ENCODE measurements at regions of chr16 and their contacts with region 1.

Region 1: DNA sequence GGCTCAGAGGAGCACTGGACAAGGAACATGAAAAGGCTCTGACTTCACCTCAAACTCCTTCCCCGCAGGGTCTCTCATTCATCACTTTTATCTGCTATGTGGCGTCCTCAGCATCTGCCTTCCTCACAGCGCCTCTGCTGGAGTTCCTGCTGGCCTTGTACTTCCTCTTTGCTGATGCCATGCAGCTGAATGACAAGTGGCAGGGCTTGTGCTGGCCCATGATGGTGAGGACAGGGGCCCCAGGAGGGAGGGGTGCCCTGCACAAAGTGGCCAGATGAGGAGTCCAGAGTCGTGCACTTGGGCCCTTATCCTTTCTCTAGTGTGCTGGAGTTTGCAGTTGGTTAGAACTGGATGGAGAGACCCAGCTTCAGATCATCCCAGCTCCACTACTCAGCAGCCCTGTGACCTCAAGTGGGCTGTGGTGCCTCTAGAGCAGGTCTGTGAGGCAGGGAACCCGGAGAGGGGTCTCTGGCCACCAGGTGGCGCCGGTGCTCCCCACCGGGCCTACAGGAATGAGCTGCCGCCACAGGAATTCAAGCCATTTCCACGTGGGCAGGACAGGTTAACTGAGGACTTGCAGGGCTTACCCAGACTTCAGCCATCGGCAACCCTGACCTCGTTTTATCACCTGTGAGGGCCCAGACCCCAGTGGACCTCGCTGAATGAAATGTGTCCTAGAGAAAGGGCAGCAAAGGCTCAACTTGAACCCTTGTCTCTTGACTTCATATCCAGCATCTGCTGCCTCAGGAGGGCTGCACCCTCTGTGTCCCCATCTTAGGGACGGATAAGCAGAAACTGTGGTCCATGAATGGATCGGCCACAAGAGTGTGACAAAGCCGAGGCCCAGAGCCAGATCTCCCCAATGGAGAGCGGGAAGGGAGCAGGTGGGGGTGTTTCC is 4.0 kb downstream of the CMTM3 start:
- DNase-seq: peak; percentile 92
- ATAC-seq: peak; percentile 31
- H3K4me3 Mint-ChIP-seq: no peak overlapping the region
- H3K27ac Mint-ChIP-seq: peak overlapping the region; percentile 71
- H3K4me1 Mint-ChIP-seq: peaks cover 35% of the 10 kb centered on the region
- H3K27me3 Mint-ChIP-seq: no peaks in the 10 kb centered on the region
- CTCF ChIP-seq: peak; percentile 85

Region 2: DNA sequence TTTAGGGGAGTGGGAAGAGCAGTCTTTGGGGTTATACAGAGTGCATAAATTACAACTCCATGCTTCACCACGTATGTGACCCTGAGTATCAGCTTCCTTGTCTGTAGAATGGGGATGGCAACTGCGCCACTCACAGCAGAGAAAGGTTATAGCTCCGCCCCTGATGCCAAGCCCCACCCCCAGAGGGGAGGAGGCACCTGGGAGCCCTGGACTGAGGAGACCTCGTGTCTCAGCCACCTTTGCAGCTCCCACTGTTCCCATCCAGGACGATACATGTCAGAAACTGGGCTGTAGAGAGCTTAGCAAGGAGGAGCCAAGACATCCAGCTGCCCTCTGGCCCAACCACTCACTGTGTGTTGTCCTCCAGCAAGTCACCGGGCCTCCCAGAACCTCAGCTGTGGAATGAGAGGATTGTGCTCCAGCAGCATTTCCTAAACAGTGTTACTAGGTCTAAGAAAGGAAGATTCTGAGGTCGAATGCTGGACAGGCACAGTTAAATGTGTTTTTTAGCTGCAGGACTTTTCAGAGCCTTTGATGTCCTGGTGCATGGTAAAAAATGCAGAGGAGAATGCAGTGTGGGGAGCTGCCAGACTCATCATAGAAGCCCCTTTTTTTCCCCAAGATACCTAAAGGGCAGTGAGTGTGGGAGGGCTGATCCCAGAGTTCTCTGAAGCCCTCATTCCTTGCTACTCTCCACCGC is 132.0 kb before region 1 on chr16:
- CTCF ChIA-PET with region 1: interaction called, 10 read pairs
- POLR2A ChIA-PET with region 1: no interaction called
- intact Hi-C with region 1: no loop called
- DNase-seq: peak; percentile 72
- ATAC-seq: peak; percentile 28
- H3K4me3 Mint-ChIP-seq: no peak overlapping the region
- H3K27ac Mint-ChIP-seq: no peak overlapping the region
- H3K4me1 Mint-ChIP-seq: peaks cover 30% of the 10 kb centered on the region
- H3K27me3 Mint-ChIP-seq: no peaks in the 10 kb centered on the region
- CTCF ChIP-seq: no peak

Region 3: DNA sequence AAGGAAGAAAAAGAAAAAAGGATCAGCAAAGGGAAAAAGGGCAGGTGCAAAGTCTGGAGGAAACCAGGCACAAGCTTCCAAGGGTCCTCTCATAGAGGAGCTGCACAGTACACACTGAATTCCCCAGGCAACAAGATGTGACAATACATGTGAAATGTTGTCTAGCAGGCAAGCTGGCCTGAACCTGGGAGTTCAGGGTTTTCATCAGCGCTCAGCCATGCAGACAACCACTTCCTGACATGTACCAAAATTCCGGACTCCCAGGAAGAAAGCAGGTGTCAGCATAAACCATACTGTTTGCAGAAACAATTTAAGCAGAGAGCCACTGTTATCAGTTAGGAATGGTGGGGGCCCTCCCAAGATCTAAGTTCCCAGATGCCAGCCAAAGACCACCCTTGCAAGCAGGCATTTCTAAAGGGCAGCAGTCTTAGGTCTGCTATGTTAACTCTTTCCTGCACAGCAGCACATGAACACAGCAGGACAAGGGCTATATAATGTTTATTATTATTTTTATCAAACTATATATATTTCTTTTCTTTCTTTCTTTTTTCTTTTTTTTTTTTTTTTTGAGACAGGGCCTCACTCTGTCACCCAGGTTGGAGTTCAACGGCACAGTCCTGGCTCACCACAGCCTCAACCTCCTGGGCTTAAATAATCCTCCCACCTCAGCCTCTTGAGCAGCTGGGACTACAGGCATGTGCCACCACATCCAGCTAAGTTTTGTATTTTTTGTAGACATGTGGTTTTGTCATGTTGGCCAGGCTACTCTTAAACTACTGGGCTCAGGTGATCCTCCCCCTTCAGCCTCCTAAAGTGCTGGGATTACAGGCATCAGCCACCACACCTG is 68.6 kb before region 1 on chr16:
- CTCF ChIA-PET with region 1: no interaction called
- POLR2A ChIA-PET with region 1: no interaction called
- intact Hi-C with region 1: no loop called
- DNase-seq: no peak
- ATAC-seq: peak; percentile 13
- H3K4me3 Mint-ChIP-seq: no peak overlapping the region
- H3K27ac Mint-ChIP-seq: no peak overlapping the region
- H3K4me1 Mint-ChIP-seq: peaks cover 15% of the 10 kb centered on the region
- H3K27me3 Mint-ChIP-seq: no peaks in the 10 kb centered on the region
- CTCF ChIP-seq: no peak

Region 4: GRCh38 chr16:66562407-66562806 is 46.1 kb before region 1 on chr16:
- CTCF ChIA-PET with region 1: interaction called, 23 read pairs
- POLR2A ChIA-PET with region 1: interaction called, 7 read pairs
- intact Hi-C with region 1: loop called (anchors 5 kb)
- DNase-seq: no peak
- ATAC-seq: no peak
- H3K4me3 Mint-ChIP-seq: no peak overlapping the region
- H3K27ac Mint-ChIP-seq: peak overlapping the region; percentile 64
- H3K4me1 Mint-ChIP-seq: peaks cover 56% of the 10 kb centered on the region
- H3K27me3 Mint-ChIP-seq: no peaks in the 10 kb centered on the region
- CTCF ChIP-seq: peak; percentile 44

Region 5: DNA sequence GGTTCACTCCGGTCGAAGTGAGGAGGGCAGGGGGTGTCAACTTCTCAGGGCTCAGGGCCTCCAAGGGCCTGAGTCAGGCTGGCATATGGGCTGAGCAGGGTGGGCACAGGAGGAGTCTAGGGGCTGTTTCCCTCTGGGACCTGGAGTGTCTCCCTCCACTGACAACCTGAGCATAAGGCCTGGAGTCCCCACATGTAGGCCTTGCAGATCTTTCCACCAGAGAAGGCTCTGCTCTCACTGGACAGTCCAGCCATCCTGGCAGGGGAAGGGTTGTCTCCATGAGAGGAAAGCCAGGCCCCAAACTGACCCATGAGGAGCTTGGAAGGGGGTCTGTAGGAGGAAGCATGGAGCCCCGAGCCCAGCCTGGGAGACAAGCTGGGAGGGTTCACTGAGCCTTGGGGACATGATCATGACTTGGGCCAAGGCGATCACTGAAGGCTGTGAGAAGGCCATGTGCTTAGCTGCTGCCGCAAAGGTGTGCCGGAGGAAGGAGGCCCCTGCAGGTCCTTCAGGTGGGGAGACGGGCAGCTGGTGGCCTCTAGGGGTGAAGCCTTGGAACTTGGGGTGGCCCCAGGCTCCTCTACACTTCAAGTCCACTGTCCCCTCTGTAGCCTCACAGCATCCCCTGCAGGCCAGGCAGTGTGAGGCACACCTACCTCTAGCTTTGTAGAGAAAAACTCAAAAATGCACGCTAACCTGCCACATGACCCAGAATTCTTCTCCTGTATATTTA is 19.3 kb before region 1 on chr16:
- CTCF ChIA-PET with region 1: interaction called, 13 read pairs
- POLR2A ChIA-PET with region 1: interaction called, 4 read pairs
- intact Hi-C with region 1: no loop called
- DNase-seq: peak; percentile 79
- ATAC-seq: peak; percentile 96
- H3K4me3 Mint-ChIP-seq: peak overlapping the region; percentile 69
- H3K27ac Mint-ChIP-seq: no peak overlapping the region
- H3K4me1 Mint-ChIP-seq: peaks cover 36% of the 10 kb centered on the region
- H3K27me3 Mint-ChIP-seq: no peaks in the 10 kb centered on the region
- CTCF ChIP-seq: peak; percentile 81

Region 6: GRCh38 chr16:66618588-66619375 is 10.3 kb after region 1 on chr16:
- CTCF ChIA-PET with region 1: interaction called, 30 read pairs
- POLR2A ChIA-PET with region 1: no interaction called
- intact Hi-C with region 1: no loop called
- DNase-seq: no peak
- ATAC-seq: peak; percentile 37
- H3K4me3 Mint-ChIP-seq: no peak overlapping the region
- H3K27ac Mint-ChIP-seq: no peak overlapping the region
- H3K4me1 Mint-ChIP-seq: peaks cover 7% of the 10 kb centered on the region
- H3K27me3 Mint-ChIP-seq: no peaks in the 10 kb centered on the region
- CTCF ChIP-seq: no peak

Region 7: DNA sequence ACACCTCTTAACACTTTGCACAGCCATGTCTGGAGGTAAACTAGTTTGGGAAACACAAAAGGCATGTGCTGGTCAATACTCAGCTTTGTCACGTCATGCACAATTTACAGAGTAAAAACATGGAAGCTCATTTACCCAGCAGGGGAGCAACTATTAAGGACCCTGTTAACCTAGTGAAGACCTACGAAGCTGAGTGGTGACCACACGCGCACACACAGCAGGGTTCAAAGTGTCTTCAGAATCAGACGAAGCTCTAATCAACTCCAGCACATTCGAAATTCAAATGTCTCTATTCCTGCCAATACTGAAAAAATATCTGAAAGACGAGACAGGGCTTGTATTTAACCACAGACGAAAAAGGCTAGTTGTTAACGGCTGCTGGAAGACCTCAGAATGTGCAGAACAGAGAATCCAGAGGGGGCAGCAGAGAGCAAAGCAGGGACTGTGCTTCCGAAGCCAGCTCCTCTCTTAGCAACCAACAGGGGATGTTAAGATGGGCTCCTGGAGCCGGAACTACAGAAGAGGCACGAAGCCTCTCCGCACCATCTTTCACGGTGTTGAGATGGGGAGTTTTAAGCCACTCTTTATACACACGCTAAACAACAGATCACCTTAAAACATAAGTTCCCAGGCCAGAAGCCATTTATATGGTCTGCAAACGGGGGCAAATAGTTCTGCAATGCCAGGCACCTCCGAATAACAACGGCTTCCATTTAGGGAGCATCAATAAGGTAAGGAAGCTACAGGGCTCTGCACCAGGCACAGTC is 42.4 kb after region 1 on chr16:
- CTCF ChIA-PET with region 1: interaction called, 38 read pairs
- POLR2A ChIA-PET with region 1: no interaction called
- intact Hi-C with region 1: no loop called
- DNase-seq: peak; percentile 90
- ATAC-seq: peak; percentile 100
- H3K4me3 Mint-ChIP-seq: peak overlapping the region; percentile 15
- H3K27ac Mint-ChIP-seq: no peak overlapping the region
- H3K4me1 Mint-ChIP-seq: peaks cover 16% of the 10 kb centered on the region
- H3K27me3 Mint-ChIP-seq: no peaks in the 10 kb centered on the region
- CTCF ChIP-seq: peak; percentile 96

Region 8: DNA sequence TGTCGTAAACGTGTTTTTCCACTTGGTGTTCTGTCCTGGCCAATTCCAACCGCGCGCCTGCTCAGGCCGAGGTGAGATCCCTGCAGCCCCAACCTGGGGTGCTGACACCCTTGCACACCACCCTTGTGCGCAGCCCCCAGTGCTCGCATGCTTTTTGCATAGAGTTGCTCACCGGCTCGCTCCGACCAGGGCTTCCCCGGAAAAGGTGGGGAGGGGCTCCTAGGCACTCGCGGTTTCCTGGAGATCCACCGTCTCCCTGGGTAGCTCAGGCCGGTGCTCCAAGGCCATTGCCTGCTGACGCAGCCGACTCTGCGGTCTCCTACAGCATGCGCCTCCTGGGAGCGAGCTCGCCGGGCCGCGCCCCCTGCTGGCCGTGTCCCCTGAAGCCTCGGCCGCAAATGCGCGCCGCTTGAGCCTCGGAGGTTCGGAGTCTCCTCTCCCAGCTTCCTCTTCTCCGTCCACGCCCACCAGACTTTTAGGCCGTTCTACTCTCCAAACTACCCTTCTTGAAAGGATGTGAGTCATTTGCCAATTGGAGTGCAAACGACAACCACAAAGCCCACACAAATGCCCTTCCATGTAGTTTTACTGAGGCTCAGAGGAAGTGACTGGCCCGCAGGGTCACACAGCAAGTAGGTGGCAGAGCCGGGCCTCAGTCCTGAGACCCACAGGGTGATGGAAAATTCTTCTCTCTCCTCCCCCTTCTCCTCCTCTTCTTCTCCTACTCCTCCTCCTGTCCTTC is 264.6 kb after region 1 on chr16:
- CTCF ChIA-PET with region 1: interaction called, 10 read pairs
- POLR2A ChIA-PET with region 1: interaction called, 3 read pairs
- intact Hi-C with region 1: no loop called
- DNase-seq: peak; percentile 97
- ATAC-seq: peak; percentile 84
- H3K4me3 Mint-ChIP-seq: peak overlapping the region; percentile 83
- H3K27ac Mint-ChIP-seq: peak overlapping the region; percentile 93
- H3K4me1 Mint-ChIP-seq: peaks cover 48% of the 10 kb centered on the region
- H3K27me3 Mint-ChIP-seq: no peaks in the 10 kb centered on the region
- CTCF ChIP-seq: peak; percentile 94

Region 9: DNA sequence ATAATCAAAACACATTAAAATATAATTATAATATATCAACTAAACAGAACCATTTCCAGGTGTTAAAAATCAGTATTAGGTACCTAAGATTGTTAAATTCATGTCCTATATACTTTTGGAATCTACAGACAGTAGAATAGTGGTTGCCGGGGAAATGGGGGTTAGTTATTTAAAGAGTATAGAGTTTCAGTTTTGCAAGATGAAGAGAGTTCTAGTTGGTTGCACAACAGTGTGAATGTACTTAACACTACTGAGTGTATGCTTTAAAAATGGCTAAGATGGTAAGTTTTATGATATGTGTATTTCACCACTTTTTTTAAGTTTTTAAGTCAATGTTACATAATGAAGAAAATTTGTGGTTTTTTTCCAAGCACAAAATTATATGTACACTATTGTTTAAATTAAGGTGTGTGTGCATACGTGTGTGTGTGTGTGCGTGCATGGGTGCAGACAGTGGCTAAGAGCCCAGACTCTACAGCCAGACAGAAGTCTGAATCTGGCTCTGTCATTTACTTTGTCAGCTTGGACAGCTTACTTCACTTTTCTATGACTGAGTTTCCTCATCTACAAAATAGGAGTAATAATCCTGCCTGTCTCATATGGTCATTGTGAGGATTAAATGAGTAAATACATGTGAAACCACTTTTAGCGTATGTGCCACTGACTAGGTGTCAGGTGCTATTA is 476.0 kb after region 1 on chr16:
- CTCF ChIA-PET with region 1: no interaction called
- POLR2A ChIA-PET with region 1: no interaction called
- intact Hi-C with region 1: no loop called
- DNase-seq: no peak
- ATAC-seq: no peak
- H3K4me3 Mint-ChIP-seq: no peak overlapping the region
- H3K27ac Mint-ChIP-seq: no peak overlapping the region
- H3K4me1 Mint-ChIP-seq: peaks cover 5% of the 10 kb centered on the region
- H3K27me3 Mint-ChIP-seq: no peaks in the 10 kb centered on the region
- CTCF ChIP-seq: no peak

Measured in activated CD8-positive, alpha-beta T cell treated with anti-CD3 and anti-CD28 coated beads for 36 hours (primary cell).